ENCODE measurements at regions of chr10 and their contacts with region 1.

Region 1: DNA sequence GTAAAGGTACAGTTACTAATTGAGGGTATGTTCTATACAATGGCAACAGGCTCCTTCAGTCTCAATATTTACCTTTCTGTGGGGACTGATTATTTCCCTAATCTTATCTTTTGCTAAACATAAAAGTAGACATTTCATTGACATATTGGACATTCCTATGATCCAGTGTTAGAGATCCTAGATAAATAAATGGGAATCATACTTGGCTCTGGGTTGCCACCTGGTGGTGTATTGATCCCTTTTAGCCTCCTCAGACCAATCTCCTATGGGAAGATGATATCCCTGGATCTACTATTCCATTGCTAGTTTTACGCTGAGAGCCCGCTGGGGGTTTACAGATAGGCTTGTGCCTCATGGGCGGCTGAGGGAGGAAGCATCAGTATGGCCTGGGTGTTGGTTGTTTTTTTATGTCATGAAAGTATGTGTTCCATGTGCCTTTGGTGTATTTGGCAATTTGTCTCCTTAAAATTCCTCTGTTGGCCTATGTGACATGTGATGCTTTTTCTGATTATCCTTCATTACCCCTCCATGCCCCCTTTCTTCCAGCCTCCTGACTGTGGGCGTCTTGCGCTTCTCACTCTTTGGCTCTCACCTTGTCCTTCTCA is 18.8 kb downstream of the CELF2 start:
- DNase-seq: peak in 2 of 6 donors; percentile 21 to 51
- ATAC-seq: peak; percentile 85 to 90 (median 88)
- H3K4me3 ChIP-seq: no peak overlapping the region
- H3K27ac ChIP-seq: no peak overlapping the region
- H3K4me1 ChIP-seq: peaks cover 0 to 4% (median 0%) of the 10 kb centered on the region in 3 donors
- H3K27me3 ChIP-seq: no peaks in the 10 kb centered on the region
- CTCF ChIP-seq: peak; percentile 27 to 50 (median 46)

Region 2: GRCh38 chr10:9331583-9332008 is 1704.9 kb before region 1 on chr10:
- intact Hi-C with region 1: loop called in 1 of 3 experiments (anchors 10 kb)
- DNase-seq: no peak
- ATAC-seq: peak; percentile 71 to 89 (median 84)
- H3K4me3 ChIP-seq: no peak overlapping the region
- H3K27ac ChIP-seq: no peak overlapping the region
- H3K4me1 ChIP-seq: no peaks in the 10 kb centered on the region
- H3K27me3 ChIP-seq: peaks cover 0 to 6% (median 0%) of the 10 kb centered on the region in 4 donors
- CTCF ChIP-seq: peak; percentile 71 to 79 (median 76)

Region 3: DNA sequence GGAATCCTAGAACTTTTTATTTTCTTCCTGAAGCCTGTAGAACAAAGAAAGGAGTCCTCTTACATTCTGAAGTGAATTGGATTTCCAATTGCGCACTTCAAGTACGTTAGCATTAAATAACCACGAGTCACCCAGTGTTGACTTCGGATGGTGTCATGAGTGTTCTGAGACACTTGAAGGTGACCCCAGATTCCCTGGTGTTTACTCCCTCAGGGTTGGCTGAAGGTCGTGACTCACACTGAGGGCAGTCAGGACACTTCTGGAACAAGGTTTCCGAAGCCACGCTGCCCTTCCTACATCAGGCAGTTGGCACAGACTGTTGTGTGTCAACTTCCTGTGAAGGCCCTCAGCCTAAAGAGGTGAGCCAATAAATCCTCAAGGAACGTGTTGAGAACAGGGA is 205.4 kb before region 1 on chr10:
- intact Hi-C with region 1: no loop called
- DNase-seq: no peak
- ATAC-seq: peak in 1 of 4 donors; percentile 18
- H3K4me3 ChIP-seq: no peak overlapping the region
- H3K27ac ChIP-seq: no peak overlapping the region
- H3K4me1 ChIP-seq: no peaks in the 10 kb centered on the region
- H3K27me3 ChIP-seq: no peaks in the 10 kb centered on the region
- CTCF ChIP-seq: no peak

Region 4: DNA sequence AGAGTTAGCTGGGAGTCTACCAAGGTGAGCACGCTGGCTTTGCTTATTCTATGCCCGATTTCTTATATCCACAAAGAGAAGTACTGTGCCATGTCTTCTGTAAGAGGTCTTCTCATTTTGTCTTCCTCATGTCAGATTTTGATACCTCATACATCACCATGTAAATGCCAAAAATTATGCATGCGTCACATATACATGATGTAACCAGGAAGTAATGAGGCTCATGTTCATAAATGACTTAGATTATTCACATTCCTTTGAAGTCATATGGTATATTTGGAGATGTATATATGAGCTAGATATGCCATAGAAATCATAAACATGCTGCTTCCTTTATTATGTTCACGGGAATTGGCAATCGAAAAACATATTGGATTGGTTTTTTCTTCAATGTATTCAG is 116.5 kb before region 1 on chr10:
- intact Hi-C with region 1: no loop called
- DNase-seq: no peak
- ATAC-seq: no peak
- H3K4me3 ChIP-seq: no peak overlapping the region
- H3K27ac ChIP-seq: no peak overlapping the region
- H3K4me1 ChIP-seq: no peaks in the 10 kb centered on the region
- H3K27me3 ChIP-seq: no peaks in the 10 kb centered on the region
- CTCF ChIP-seq: no peak

Region 5: GRCh38 chr10:12135631-12136030 is 1099.1 kb after region 1 on chr10:
- intact Hi-C with region 1: no loop called
- DNase-seq: no peak
- ATAC-seq: no peak
- H3K4me3 ChIP-seq: no peak overlapping the region
- H3K27ac ChIP-seq: no peak overlapping the region
- H3K4me1 ChIP-seq: no peaks in the 10 kb centered on the region
- H3K27me3 ChIP-seq: no peaks in the 10 kb centered on the region
- CTCF ChIP-seq: no peak